ENCODE measurements at regions of chr17 and their contacts with region 1.

Region 1: GRCh38 chr17:17919169-17920107 is 52.8 kb downstream of the TOM1L2 start:
- DNase-seq: peak; percentile 59 to 78
- ATAC-seq: peak; percentile 58
- H3K4me3 ChIP-seq: no peak overlapping the region
- H3K27ac ChIP-seq: peak overlapping the region in 1 of 4 donors; percentile 19
- H3K4me1 ChIP-seq: peaks cover 52 to 58% of the 10 kb centered on the region in 2 donors
- H3K27me3 ChIP-seq: no peaks in the 10 kb centered on the region
- CTCF ChIP-seq: peak; percentile 71 to 87 (median 81)
- POLR2A ChIP-seq: no peak

Region 2: DNA sequence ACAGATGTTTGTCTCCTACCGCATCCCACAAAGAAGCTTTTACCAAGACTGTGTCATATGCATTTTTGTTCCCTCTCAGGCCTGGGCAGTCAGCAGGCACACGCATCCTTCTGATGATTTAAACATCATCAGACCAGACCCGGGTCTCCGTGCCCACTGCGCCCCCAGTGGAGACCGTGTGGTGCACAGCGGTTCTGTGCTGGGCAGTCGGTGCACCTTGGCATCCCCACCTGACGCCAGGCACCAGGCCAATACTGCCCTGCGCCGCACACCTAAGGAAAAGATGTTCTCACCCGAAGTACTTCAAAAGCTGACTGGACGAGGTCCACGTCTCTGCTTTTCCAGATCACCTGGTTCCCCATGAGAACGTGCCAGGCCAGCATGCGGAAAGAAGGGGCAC is 702.7 kb before region 1 on chr17:
- in situ Hi-C with region 1: no loop called
- intact Hi-C with region 1: no loop called
- DNase-seq: no peak
- ATAC-seq: no peak
- H3K4me3 ChIP-seq: no peak overlapping the region
- H3K27ac ChIP-seq: no peak overlapping the region
- H3K4me1 ChIP-seq: no peaks in the 10 kb centered on the region
- H3K27me3 ChIP-seq: no peaks in the 10 kb centered on the region
- CTCF ChIP-seq: no peak
- POLR2A ChIP-seq: no peak

Region 3: GRCh38 chr17:17681187-17681848 is 238.1 kb before region 1 on chr17 and contains the start of gene RAI1:
- in situ Hi-C with region 1: loop called in 1 of 4 experiments (anchors 10 kb)
- intact Hi-C with region 1: loop called (anchors 2 kb)
- DNase-seq: peak; percentile 56 to 64
- ATAC-seq: peak; percentile 78 to 81
- H3K4me3 ChIP-seq: peak within 1 kb of the TSS; percentile 77 to 95 (median 85)
- H3K27ac ChIP-seq: peak within 1 kb of the TSS; percentile 58 to 87 (median 80)
- H3K4me1 ChIP-seq: peaks cover 18 to 26% of the 10 kb centered on the region in 2 donors
- H3K27me3 ChIP-seq: no peaks in the 10 kb centered on the region
- CTCF ChIP-seq: peak; percentile 50 to 98 (median 97)
- POLR2A ChIP-seq: peak; percentile 33 to 49
- total RNA-seq, gene RAI1: 2.1 to 6.7 (median 4.3) TPM

Region 4: DNA sequence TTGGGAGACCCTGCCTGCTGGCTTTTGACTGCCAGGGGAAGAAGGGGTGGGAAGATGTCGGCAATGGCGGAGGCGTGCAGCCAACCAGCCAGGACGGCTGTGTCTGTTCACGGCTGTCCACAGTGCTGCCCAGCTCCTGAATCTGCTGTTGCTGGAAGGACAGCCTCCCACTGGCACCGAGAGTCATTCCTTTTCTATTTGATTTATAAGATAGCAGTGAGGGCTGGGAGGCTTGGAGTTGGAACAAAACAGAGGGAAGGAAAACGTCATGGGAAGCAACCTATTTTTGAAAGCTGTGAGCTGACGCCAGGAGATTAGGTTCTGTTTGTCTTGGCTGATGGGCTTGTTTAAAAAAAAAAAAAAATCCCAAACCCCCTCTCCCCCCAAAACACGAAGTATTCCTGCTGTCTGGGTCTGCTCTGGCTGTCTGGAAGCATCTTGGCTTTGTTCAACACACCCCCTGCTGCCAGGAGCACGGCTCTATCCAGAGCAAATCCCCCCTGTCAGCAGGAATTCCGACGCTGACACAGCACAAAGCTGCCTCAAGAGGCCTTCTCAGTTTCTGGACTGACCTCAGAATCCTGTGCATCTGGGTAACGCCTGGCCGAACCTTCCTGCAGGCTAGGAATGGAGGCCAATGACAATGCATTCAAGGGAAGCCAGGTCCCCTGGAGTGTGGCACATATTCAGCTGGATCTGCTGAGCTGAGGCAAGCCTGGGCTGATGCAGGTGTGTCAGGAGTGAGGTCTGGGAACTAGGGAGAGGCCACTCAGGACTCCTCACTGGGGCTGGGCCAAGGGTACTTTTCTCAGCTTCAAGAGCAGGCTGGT is 41.7 kb before region 1 on chr17:
- in situ Hi-C with region 1: no loop called
- intact Hi-C with region 1: loop called (anchors 2 kb)
- DNase-seq: peak; percentile 66 to 86
- ATAC-seq: peak; percentile 85 to 88
- H3K4me3 ChIP-seq: peak overlapping the region in 1 of 4 donors; percentile 34
- H3K27ac ChIP-seq: peak overlapping the region; percentile 84 to 90 (median 90)
- H3K4me1 ChIP-seq: peaks cover 47 to 61% of the 10 kb centered on the region in 2 donors
- H3K27me3 ChIP-seq: no peaks in the 10 kb centered on the region
- CTCF ChIP-seq: no peak
- POLR2A ChIP-seq: no peak

Region 5: GRCh38 chr17:17888821-17889220 is 30.6 kb before region 1 on chr17:
- in situ Hi-C with region 1: no loop called
- intact Hi-C with region 1: no loop called
- DNase-seq: no peak
- ATAC-seq: no peak
- H3K4me3 ChIP-seq: no peak overlapping the region
- H3K27ac ChIP-seq: no peak overlapping the region
- H3K4me1 ChIP-seq: peaks cover 30 to 31% of the 10 kb centered on the region in 2 donors
- H3K27me3 ChIP-seq: no peaks in the 10 kb centered on the region
- CTCF ChIP-seq: no peak
- POLR2A ChIP-seq: no peak

Region 6: DNA sequence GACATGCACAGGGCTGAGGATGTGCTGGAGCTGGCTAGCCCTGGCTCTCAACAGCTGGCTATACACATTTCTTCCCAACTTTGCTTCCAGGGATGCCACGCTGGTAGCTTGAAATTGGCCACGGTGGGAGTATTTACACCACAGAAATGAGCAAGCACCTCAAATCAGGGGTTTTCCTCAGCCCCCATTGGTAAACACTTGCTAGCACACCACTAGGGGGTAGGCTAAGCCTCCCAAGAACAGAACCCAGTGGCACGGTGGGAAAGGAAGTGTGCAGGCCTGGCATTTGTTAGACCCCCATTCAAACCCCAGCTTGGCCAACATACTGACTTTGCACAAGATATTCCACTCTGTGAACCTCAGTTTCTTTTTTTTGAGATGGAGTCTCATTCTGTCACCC is 66.1 kb after region 1 on chr17:
- in situ Hi-C with region 1: loop called in 1 of 4 experiments (anchors 10 kb)
- intact Hi-C with region 1: no loop called
- DNase-seq: no peak
- ATAC-seq: no peak
- H3K4me3 ChIP-seq: no peak overlapping the region
- H3K27ac ChIP-seq: no peak overlapping the region
- H3K4me1 ChIP-seq: no peaks in the 10 kb centered on the region
- H3K27me3 ChIP-seq: no peaks in the 10 kb centered on the region
- CTCF ChIP-seq: no peak
- POLR2A ChIP-seq: no peak